ENCODE measurements at regions of chr1 and their contacts with region 1.

Region 1: DNA sequence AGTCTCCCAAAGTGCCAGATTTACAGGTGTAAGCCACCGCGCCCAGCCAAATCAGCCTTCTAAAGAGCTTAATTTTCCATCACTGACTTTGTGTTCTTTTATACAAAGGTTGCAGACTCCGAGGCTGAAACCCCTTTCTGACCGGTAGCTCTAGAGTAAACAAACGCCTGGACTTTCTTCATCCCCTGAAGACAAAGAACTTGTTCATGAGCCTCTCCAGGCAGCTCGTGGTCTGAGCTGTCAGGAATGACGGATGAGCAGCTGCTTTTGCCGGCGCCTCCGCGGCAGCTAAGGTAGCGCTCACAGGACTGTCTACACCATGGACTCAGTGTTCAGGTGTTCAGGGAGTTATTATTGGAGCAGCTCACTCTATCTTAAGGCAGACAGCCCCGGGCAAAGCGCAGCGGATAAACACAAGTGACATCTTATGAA is 128.5 kb upstream of the ERRFI1 start:
- DNase-seq: no peak
- H3K4me3 ChIP-seq: no peak overlapping the region
- H3K4me3 Mint-ChIP-seq: no peak overlapping the region
- H3K27ac ChIP-seq: no peak overlapping the region
- H3K27ac Mint-ChIP-seq: peak overlapping the region in 4 of 7 donors; percentile 42 to 74 (median 56)
- H3K4me1 ChIP-seq: peaks cover 50% of the 10 kb centered on the region
- H3K4me1 Mint-ChIP-seq: peaks cover 28 to 59% (median 39%) of the 10 kb centered on the region in 4 donors
- H3K27me3 ChIP-seq: no peaks in the 10 kb centered on the region
- H3K27me3 Mint-ChIP-seq: no peaks in the 10 kb centered on the region

Region 2: GRCh38 chr1:7667625-7668218 is 486.9 kb before region 1 on chr1:
- CTCF ChIA-PET with region 1: no interaction called
- POLR2A ChIA-PET with region 1: no interaction called
- intact Hi-C with region 1: no loop called
- DNase-seq: peak; percentile 72 to 81 (median 75)
- H3K4me3 ChIP-seq: no peak overlapping the region
- H3K4me3 Mint-ChIP-seq: no peak overlapping the region
- H3K27ac ChIP-seq: no peak overlapping the region
- H3K27ac Mint-ChIP-seq: peak overlapping the region in 3 of 7 donors; percentile 61 to 70 (median 63)
- H3K4me1 ChIP-seq: peaks cover 5% of the 10 kb centered on the region
- H3K4me1 Mint-ChIP-seq: peaks cover 0 to 6% (median 4%) of the 10 kb centered on the region in 4 donors
- H3K27me3 ChIP-seq: no peaks in the 10 kb centered on the region
- H3K27me3 Mint-ChIP-seq: no peaks in the 10 kb centered on the region

Region 3: GRCh38 chr1:8026153-8026975 is 128.3 kb before region 1 on chr1 and contains the start of gene ERRFI1:
- CTCF ChIA-PET with region 1: no interaction called
- POLR2A ChIA-PET with region 1: no interaction called
- intact Hi-C with region 1: loop called (anchors 1 kb)
- DNase-seq: peak; percentile 80 to 88 (median 81)
- H3K4me3 ChIP-seq: peak within 1 kb of the TSS in 1 of 2 donors; percentile 33
- H3K4me3 Mint-ChIP-seq: peak within 1 kb of the TSS; percentile 81 to 91 (median 86)
- H3K27ac ChIP-seq: no peak within 1 kb of the TSS
- H3K27ac Mint-ChIP-seq: peak within 1 kb of the TSS; percentile 8 to 89 (median 86)
- H3K4me1 ChIP-seq: peaks cover 14% of the 10 kb centered on the region
- H3K4me1 Mint-ChIP-seq: peaks cover 8 to 13% (median 10%) of the 10 kb centered on the region in 4 donors
- H3K27me3 ChIP-seq: peaks cover 6% of the 10 kb centered on the region
- H3K27me3 Mint-ChIP-seq: peaks cover 7 to 13% of the 10 kb centered on the region in 2 donors
- total RNA-seq, gene ERRFI1: 1.0 TPM

Region 4: GRCh38 chr1:8113262-8114220 is 41.1 kb before region 1 on chr1:
- CTCF ChIA-PET with region 1: no interaction called
- POLR2A ChIA-PET with region 1: interaction called, 15 read pairs
- intact Hi-C with region 1: loop called (anchors 10 kb)
- DNase-seq: peak in 4 of 5 donors; percentile 2 to 14 (median 11)
- H3K4me3 ChIP-seq: no peak overlapping the region
- H3K4me3 Mint-ChIP-seq: peak overlapping the region in 5 of 8 donors; percentile 7 to 70 (median 67)
- H3K27ac ChIP-seq: no peak overlapping the region
- H3K27ac Mint-ChIP-seq: peak overlapping the region in 6 of 7 donors; percentile 9 to 89 (median 76)
- H3K4me1 ChIP-seq: peaks cover 16% of the 10 kb centered on the region
- H3K4me1 Mint-ChIP-seq: peaks cover 12 to 20% (median 15%) of the 10 kb centered on the region in 4 donors
- H3K27me3 ChIP-seq: no peaks in the 10 kb centered on the region
- H3K27me3 Mint-ChIP-seq: peaks cover 0 to 2% of the 10 kb centered on the region in 2 donors

Region 5: GRCh38 chr1:8182034-8182761 is 27.6 kb after region 1 on chr1:
- CTCF ChIA-PET with region 1: interaction called, 3 read pairs
- POLR2A ChIA-PET with region 1: interaction called, 29 read pairs
- intact Hi-C with region 1: loop called (anchors 1 kb)
- DNase-seq: peak; percentile 70 to 84 (median 79)
- H3K4me3 ChIP-seq: peak overlapping the region in 1 of 2 donors; percentile 15
- H3K4me3 Mint-ChIP-seq: peak overlapping the region; percentile 25 to 85 (median 71)
- H3K27ac ChIP-seq: peak overlapping the region; percentile 41
- H3K27ac Mint-ChIP-seq: peak overlapping the region; percentile 68 to 97 (median 91)
- H3K4me1 ChIP-seq: peaks cover 28% of the 10 kb centered on the region
- H3K4me1 Mint-ChIP-seq: peaks cover 16 to 23% (median 21%) of the 10 kb centered on the region in 4 donors
- H3K27me3 ChIP-seq: no peaks in the 10 kb centered on the region
- H3K27me3 Mint-ChIP-seq: no peaks in the 10 kb centered on the region

Region 6: DNA sequence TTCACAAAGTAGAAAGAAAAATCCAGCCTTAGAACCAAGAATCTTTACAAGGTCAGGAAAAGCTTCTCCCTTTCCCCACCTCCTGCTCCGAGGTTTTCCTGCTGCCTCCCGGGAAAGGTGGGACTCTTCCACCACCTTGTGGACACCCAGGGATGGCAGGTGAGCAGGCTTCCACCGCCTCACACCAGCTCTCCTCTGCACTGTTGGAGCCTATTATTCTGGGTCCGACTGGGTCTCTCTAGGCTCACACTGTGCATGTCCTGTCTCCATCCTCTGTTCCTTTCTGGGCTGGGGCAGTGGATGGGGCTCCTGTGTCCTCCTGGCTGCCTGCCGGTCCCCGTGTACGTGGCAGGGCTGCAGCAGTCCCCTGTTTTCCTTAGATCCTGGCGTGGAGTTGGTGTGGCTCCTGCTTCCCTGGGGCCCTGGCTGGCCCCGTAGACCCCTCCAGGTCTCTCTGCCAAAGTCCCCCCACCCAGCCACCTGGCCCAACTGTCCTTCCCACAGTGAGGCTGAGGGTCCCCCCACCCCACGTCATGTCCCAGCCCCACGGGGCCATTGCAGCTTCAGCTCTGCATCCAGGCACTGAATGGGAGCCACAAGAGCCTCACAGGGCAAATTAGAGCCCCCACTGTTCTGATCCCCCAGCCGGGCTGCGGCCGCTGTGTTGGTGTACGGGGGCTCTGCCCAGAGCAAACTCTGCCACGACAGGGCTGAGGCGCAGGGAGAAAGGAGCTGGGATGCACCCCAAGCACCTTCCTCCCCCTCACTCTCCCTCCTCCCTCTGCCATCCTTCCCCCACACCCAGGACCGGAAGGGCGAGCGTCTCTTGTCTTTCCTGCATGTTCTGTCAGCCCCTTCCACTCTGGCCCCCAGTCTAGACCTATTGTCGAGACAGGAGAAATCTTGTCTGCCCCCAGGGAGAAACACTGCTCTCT is 160.0 kb after region 1 on chr1:
- CTCF ChIA-PET with region 1: interaction called, 3 read pairs
- POLR2A ChIA-PET with region 1: no interaction called
- intact Hi-C with region 1: loop called (anchors 10 kb)
- DNase-seq: peak; percentile 44 to 53 (median 50)
- H3K4me3 ChIP-seq: no peak overlapping the region
- H3K4me3 Mint-ChIP-seq: peak overlapping the region in 1 of 8 donors; percentile 55
- H3K27ac ChIP-seq: no peak overlapping the region
- H3K27ac Mint-ChIP-seq: peak overlapping the region in 1 of 7 donors; percentile 69
- H3K4me1 ChIP-seq: peaks cover 11% of the 10 kb centered on the region
- H3K4me1 Mint-ChIP-seq: peaks cover 4 to 30% (median 16%) of the 10 kb centered on the region in 4 donors
- H3K27me3 ChIP-seq: peaks cover 8% of the 10 kb centered on the region
- H3K27me3 Mint-ChIP-seq: peaks cover 16 to 24% of the 10 kb centered on the region in 2 donors